Prostate gland (tissue), 2 donors: ENCODE measurements at regions of chr11 and their contacts with region 1.

Region 1: GRCh38 chr11:14249121-14249963 is 109.6 kb downstream of the RRAS2 start:
- DNase-seq: peak; percentile 38
- H3K4me3 ChIP-seq: no peak overlapping the region
- H3K27ac ChIP-seq: no peak overlapping the region
- H3K4me1 ChIP-seq: no peaks in the 10 kb centered on the region
- H3K27me3 ChIP-seq: no peaks in the 10 kb centered on the region
- CTCF ChIP-seq: peak; percentile 80 to 89 (median 84)
- POLR2A ChIP-seq: no peak

Region 2: DNA sequence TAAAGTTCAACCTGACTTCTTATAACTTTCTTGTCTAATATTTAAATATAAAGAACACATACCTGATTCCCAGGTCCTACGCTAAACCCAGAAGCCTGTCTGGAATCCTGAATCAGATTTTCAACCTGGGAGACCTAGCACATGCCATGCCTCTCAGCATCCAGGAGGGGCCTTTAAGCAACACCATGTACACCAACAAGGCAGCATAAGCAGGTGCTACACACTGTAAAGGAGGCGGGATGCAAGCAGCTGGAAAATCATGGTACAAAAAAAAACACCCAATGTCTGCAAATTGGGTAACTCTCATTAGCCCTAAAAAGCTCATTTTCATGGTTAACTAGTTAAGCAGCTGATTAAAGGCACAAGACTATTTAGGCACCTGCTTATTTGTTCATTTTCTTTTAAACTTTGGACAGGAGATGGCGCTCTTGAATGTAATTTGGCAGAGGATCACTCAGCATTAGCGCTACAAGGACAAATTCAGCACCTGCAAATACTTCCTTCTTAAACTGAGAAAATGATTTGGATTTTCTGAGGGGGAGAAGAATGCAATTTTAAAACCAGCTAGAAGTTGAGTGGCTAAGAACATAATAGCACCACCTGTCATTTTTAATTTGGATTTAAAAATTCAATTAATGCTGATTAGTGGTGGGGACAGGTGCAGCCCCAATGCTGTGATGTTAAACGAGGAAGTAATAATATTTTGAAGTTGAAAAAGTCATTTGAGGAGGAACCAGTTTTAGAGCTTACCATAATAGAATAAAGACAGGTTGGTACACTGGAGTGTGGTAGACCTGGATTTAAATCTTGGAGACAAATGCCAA is 476.9 kb before region 1 on chr11:
- intact Hi-C with region 1: loop called (anchors 10 kb)
- DNase-seq: peak; percentile 48
- H3K4me3 ChIP-seq: no peak overlapping the region
- H3K27ac ChIP-seq: no peak overlapping the region
- H3K4me1 ChIP-seq: no peaks in the 10 kb centered on the region
- H3K27me3 ChIP-seq: no peaks in the 10 kb centered on the region
- CTCF ChIP-seq: peak in 3 of 4 experiments; percentile 37 to 63 (median 61)
- POLR2A ChIP-seq: no peak

Region 3: DNA sequence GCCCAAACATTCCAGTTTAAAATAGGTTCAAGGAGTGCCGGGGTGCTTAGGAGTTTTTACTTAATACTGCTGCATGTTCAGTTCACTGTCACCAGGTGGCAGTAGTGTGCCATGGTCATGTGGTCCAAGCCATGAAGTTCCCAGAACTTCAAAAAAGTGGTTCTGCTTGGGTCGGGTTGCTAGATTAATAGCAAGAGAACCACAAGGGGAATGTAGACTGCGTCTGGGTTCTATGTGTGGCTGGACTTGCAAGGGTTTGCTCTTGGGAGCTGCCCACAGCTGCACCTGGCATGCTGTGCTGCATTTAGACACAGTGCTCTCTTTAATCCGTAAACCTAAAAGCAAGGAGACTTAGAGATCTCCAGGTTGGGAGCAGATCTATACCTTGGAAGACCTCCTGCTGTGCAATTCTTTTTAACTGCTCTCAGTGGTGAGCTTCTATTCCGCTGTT is 293.3 kb before region 1 on chr11:
- intact Hi-C with region 1: loop called (anchors 1 kb)
- DNase-seq: peak; percentile 46
- H3K4me3 ChIP-seq: no peak overlapping the region
- H3K27ac ChIP-seq: no peak overlapping the region
- H3K4me1 ChIP-seq: no peaks in the 10 kb centered on the region
- H3K27me3 ChIP-seq: no peaks in the 10 kb centered on the region
- CTCF ChIP-seq: peak; percentile 75 to 94 (median 88)
- POLR2A ChIP-seq: no peak

Region 4: GRCh38 chr11:14148653-14149273 is 100.6 kb before region 1 on chr11:
- intact Hi-C with region 1: loop called (anchors 5 kb)
- DNase-seq: no peak
- H3K4me3 ChIP-seq: no peak overlapping the region
- H3K27ac ChIP-seq: no peak overlapping the region
- H3K4me1 ChIP-seq: no peaks in the 10 kb centered on the region
- H3K27me3 ChIP-seq: no peaks in the 10 kb centered on the region
- CTCF ChIP-seq: peak; percentile 35 to 84 (median 70)
- POLR2A ChIP-seq: no peak

Region 5: GRCh38 chr11:14288189-14288935 is 39.0 kb after region 1 on chr11:
- intact Hi-C with region 1: no loop called
- DNase-seq: peak; percentile 30
- H3K4me3 ChIP-seq: no peak overlapping the region
- H3K27ac ChIP-seq: peak overlapping the region in 1 of 2 donors; percentile 17
- H3K4me1 ChIP-seq: no peaks in the 10 kb centered on the region
- H3K27me3 ChIP-seq: no peaks in the 10 kb centered on the region
- CTCF ChIP-seq: no peak
- POLR2A ChIP-seq: no peak